Ovary (tissue), 10 donors: ENCODE measurements at regions of chrX and their contacts with region 1.

Region 1: DNA sequence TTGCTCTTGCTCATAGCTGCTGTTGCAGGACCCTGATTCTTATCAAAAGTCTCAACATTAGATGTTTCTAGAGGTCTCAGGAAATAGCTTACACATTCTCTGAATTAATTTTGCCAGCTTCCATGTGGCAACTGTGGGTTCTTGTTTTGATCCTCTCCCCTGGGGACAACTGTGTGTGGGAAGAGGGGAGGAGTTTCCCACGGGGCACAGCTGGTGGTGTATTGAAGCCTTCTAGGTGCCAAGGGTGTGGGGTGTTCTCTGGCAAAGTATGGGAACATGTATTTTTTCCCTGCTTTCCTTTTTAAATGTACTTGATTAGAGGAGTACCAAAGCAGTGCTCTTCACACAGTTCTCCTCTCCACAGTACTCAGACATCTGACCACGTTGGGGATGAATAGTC is 212.7 kb downstream of the RPA4 start:
- DNase-seq: no peak
- H3K4me3 ChIP-seq: no peak overlapping the region
- H3K27ac ChIP-seq: no peak overlapping the region
- H3K4me1 ChIP-seq: no peaks in the 10 kb centered on the region
- H3K27me3 ChIP-seq: no peaks in the 10 kb centered on the region
- CTCF ChIP-seq: no peak
- EP300 ChIP-seq: no peak
- POLR2A ChIP-seq: no peak

Region 2: GRCh38 chrX:97175144-97175543 is 78.8 kb after region 1 on chrX:
- intact Hi-C with region 1: loop called in 1 of 4 experiments (anchors 2 kb)
- DNase-seq: no peak
- H3K4me3 ChIP-seq: no peak overlapping the region
- H3K27ac ChIP-seq: no peak overlapping the region
- H3K4me1 ChIP-seq: no peaks in the 10 kb centered on the region
- H3K27me3 ChIP-seq: no peaks in the 10 kb centered on the region
- CTCF ChIP-seq: no peak
- EP300 ChIP-seq: no peak
- POLR2A ChIP-seq: no peak